MCF 10A (cell line): ENCODE measurements at regions of chr1 and their contacts with region 1.

Region 1: DNA sequence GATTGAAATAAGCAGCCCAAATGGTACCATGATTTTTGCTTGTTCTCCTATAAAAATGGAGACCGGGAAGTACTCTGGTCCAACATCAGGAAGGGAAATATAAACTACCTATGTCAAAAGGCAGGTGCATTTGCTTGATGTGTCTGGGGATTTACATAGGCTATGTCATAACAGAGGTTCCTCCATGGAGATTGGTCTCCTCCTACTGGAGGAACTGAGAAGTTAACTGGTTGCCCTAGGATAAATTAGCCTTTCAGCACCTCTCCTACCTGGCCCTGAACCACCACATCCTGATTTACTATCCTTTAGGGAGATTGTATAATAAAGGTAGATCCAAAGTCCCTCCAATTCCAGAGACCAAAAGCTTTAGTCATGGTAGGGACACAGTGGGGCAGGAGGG is 1109.3 kb upstream of the B3GALT2 start:
- DNase-seq: peak; percentile 74
- H3K4me3 Mint-ChIP-seq: no peak overlapping the region
- H3K27ac Mint-ChIP-seq: no peak overlapping the region
- H3K4me1 Mint-ChIP-seq: no peaks in the 10 kb centered on the region
- H3K27me3 Mint-ChIP-seq: no peaks in the 10 kb centered on the region
- CTCF ChIP-seq: peak; percentile 73

Region 2: GRCh38 chr1:193183019-193183627 is 1112.6 kb before region 1 on chr1:
- CTCF ChIA-PET with region 1: interaction called, 4 read pairs
- POLR2A ChIA-PET with region 1: no interaction called
- intact Hi-C with region 1: loop called (anchors 1 kb)
- DNase-seq: peak; percentile 77
- H3K4me3 Mint-ChIP-seq: no peak overlapping the region
- H3K27ac Mint-ChIP-seq: no peak overlapping the region
- H3K4me1 Mint-ChIP-seq: peaks cover 26% of the 10 kb centered on the region
- H3K27me3 Mint-ChIP-seq: no peaks in the 10 kb centered on the region
- CTCF ChIP-seq: peak; percentile 83

Region 3: DNA sequence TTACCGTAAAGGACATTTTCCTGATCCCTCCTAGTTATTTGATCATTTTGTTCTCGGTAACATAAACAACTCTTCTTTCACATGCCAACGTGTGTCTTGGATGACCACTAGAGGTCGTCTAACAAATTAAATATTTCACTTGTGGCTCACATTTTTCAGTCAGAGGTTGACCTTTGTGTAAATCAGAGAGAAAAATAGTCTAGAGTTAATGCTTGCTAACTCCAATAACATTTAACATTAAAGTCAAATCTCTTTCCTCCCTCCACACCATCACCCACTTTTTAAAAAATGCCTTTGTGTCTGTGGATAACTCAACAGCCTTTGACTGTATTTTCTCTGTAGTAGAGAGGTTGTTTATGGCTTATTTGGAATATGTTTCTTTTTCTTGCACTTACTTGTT is 888.8 kb before region 1 on chr1:
- CTCF ChIA-PET with region 1: interaction called, 3 read pairs
- POLR2A ChIA-PET with region 1: no interaction called
- intact Hi-C with region 1: loop called (anchors 1 kb)
- DNase-seq: peak; percentile 75
- H3K4me3 Mint-ChIP-seq: no peak overlapping the region
- H3K27ac Mint-ChIP-seq: peak overlapping the region; percentile 17
- H3K4me1 Mint-ChIP-seq: peaks cover 10% of the 10 kb centered on the region
- H3K27me3 Mint-ChIP-seq: no peaks in the 10 kb centered on the region
- CTCF ChIP-seq: peak; percentile 68

Region 4: DNA sequence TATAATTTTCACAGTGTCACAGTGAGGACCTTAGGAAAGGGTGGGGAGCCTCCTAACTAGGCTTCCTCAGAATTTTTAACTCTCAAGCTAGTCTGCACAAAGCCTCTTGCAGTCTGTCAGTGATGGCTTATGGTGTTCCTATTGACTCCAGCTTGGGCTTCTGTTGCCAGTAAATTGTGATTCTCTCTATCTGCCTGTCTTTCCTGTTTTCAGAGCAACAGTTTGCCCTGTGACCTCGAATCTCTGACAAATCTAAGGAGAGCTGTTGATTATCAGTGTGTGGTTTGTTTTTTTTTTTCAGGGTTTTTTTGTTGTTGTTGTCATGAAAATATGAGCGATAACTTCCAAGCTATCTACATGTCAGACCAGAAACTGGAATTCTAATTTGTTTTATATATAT is 686.1 kb before region 1 on chr1:
- CTCF ChIA-PET with region 1: no interaction called
- POLR2A ChIA-PET with region 1: no interaction called
- intact Hi-C with region 1: loop called (anchors 2 kb)
- DNase-seq: no peak
- H3K4me3 Mint-ChIP-seq: no peak overlapping the region
- H3K27ac Mint-ChIP-seq: no peak overlapping the region
- H3K4me1 Mint-ChIP-seq: no peaks in the 10 kb centered on the region
- H3K27me3 Mint-ChIP-seq: no peaks in the 10 kb centered on the region
- CTCF ChIP-seq: no peak

Region 5: GRCh38 chr1:194004146-194004545 is 291.5 kb before region 1 on chr1:
- CTCF ChIA-PET with region 1: no interaction called
- POLR2A ChIA-PET with region 1: no interaction called
- intact Hi-C with region 1: no loop called
- DNase-seq: no peak
- H3K4me3 Mint-ChIP-seq: no peak overlapping the region
- H3K27ac Mint-ChIP-seq: no peak overlapping the region
- H3K4me1 Mint-ChIP-seq: no peaks in the 10 kb centered on the region
- H3K27me3 Mint-ChIP-seq: no peaks in the 10 kb centered on the region
- CTCF ChIP-seq: no peak

Region 6: DNA sequence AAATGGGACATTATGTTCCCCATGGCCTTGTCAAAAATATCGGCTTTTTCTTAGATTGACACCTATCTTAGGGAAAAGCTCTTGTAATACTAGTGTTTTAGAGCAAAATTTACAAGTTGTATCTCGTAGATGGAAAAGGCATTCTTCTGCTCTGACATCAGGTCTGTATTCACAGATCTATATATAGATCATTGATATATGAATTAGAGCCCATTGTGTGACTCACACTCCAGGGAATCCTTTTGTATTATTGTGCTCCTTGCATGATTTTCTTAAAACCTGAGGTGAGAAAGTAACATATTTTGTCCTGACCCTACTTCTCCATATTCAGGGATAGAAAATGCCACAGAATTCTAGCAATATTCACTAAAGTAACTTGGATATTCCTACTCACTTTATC is 51.5 kb after region 1 on chr1:
- CTCF ChIA-PET with region 1: no interaction called
- POLR2A ChIA-PET with region 1: no interaction called
- intact Hi-C with region 1: no loop called
- DNase-seq: no peak
- H3K4me3 Mint-ChIP-seq: no peak overlapping the region
- H3K27ac Mint-ChIP-seq: no peak overlapping the region
- H3K4me1 Mint-ChIP-seq: no peaks in the 10 kb centered on the region
- H3K27me3 Mint-ChIP-seq: no peaks in the 10 kb centered on the region
- CTCF ChIP-seq: no peak

Region 7: GRCh38 chr1:195804547-195804946 is 1508.9 kb after region 1 on chr1:
- CTCF ChIA-PET with region 1: interaction called, 3 read pairs
- POLR2A ChIA-PET with region 1: no interaction called
- intact Hi-C with region 1: loop called (anchors 10 kb)
- DNase-seq: peak; percentile 25
- H3K4me3 Mint-ChIP-seq: no peak overlapping the region
- H3K27ac Mint-ChIP-seq: no peak overlapping the region
- H3K4me1 Mint-ChIP-seq: peaks cover 6% of the 10 kb centered on the region
- H3K27me3 Mint-ChIP-seq: no peaks in the 10 kb centered on the region
- CTCF ChIP-seq: peak; percentile 25